ENCODE measurements at regions of chr3 and their contacts with region 1.

Region 1: GRCh38 chr3:176650478-176650877 is 546.8 kb downstream of the TBL1XR1 start:
- DNase-seq: peak; percentile 23
- ATAC-seq: 0 out of 2 replicates have a peak, but pooled peaks have one; percentile 18
- H3K4me3 ChIP-seq: no peak overlapping the region
- H3K27ac ChIP-seq: no peak overlapping the region
- H3K4me1 ChIP-seq: no peaks in the 10 kb centered on the region
- H3K27me3 ChIP-seq: no peaks in the 10 kb centered on the region
- CTCF ChIP-seq: peak; percentile 50

Region 2: DNA sequence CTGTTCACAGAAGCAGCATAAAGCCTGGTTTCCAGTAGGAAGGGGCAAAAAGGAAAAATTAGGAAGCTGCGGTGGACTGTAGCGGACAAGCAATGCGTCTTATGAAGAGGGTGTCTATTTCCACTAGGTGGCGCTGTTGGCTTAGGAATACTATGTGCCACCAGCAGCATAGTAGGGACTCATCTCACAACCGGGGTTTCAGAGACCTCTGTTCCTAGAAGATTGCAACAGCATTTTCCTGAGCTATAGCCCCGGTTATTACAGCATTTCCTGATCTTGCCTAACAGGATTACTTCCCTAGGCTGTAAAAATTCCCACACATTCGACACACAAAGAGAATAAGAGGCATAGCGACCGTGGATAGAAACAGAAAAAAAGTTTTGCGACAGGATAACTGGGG is 136.2 kb before region 1 on chr3:
- CTCF ChIA-PET with region 1: interaction called, 3 read pairs
- POLR2A ChIA-PET with region 1: no interaction called
- intact Hi-C with region 1: loop called (anchors 1 kb)
- DNase-seq: peak; percentile 80
- ATAC-seq: peak; percentile 64
- H3K4me3 ChIP-seq: no peak overlapping the region
- H3K27ac ChIP-seq: no peak overlapping the region
- H3K4me1 ChIP-seq: no peaks in the 10 kb centered on the region
- H3K27me3 ChIP-seq: no peaks in the 10 kb centered on the region
- CTCF ChIP-seq: peak; percentile 87

Region 3: GRCh38 chr3:176579711-176580185 is 70.7 kb before region 1 on chr3:
- CTCF ChIA-PET with region 1: interaction called, 3 read pairs
- POLR2A ChIA-PET with region 1: no interaction called
- intact Hi-C with region 1: loop called (anchors 5 kb)
- DNase-seq: peak; percentile 56
- ATAC-seq: peak; percentile 81
- H3K4me3 ChIP-seq: no peak overlapping the region
- H3K27ac ChIP-seq: no peak overlapping the region
- H3K4me1 ChIP-seq: peaks cover 18% of the 10 kb centered on the region
- H3K27me3 ChIP-seq: no peaks in the 10 kb centered on the region
- CTCF ChIP-seq: no peak

Measured in PC-3 (cell line).